ENCODE measurements at regions of chr6 and their contacts with region 1.

Region 1: GRCh38 chr6:53348371-53349208 is at the start of gene ELOVL5:
- DNase-seq: peak; percentile 100
- H3K4me3 ChIP-seq: peak within 1 kb of the TSS; percentile 82 to 98 (median 91)
- H3K27ac ChIP-seq: peak within 1 kb of the TSS; percentile 97 to 100 (median 98)
- H3K4me1 ChIP-seq: peaks cover 7 to 44% (median 31%) of the 10 kb centered on the region in 4 donors
- H3K27me3 ChIP-seq: no peaks in the 10 kb centered on the region
- CTCF ChIP-seq: no peak
- EP300 ChIP-seq: no peak
- POLR2A ChIP-seq: peak; percentile 64
- total RNA-seq, gene ELOVL5: 55.2 to 80.2 (median 64.8) TPM

Region 2: DNA sequence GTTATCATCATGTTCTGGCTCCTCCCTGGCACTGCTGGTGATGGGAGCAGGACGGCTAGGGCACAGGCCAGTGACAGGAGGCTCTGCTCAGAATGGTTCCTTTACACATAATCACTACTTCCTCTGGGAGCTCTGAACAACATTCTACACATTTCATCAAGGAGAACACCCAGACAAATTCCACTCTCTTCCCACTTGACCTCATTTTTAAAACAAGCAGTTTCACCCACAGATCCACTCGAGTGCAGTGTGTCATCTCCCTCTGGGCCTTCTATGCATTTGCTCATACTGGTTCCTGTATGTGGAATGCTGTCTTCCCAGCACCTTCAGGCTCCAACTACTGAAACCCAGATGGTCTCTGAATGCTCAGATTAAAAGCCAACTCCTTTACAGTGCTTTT is 84.7 kb before region 1 on chr6:
- intact Hi-C with region 1: no loop called
- DNase-seq: no peak
- H3K4me3 ChIP-seq: no peak overlapping the region
- H3K27ac ChIP-seq: no peak overlapping the region
- H3K4me1 ChIP-seq: peaks cover 0 to 5% (median 0%) of the 10 kb centered on the region in 4 donors
- H3K27me3 ChIP-seq: no peaks in the 10 kb centered on the region
- CTCF ChIP-seq: no peak
- EP300 ChIP-seq: no peak
- POLR2A ChIP-seq: no peak

Region 3: GRCh38 chr6:53300656-53301551 is 47.7 kb before region 1 on chr6:
- intact Hi-C with region 1: loop called (anchors 5 kb)
- DNase-seq: no peak
- H3K4me3 ChIP-seq: no peak overlapping the region
- H3K27ac ChIP-seq: peak overlapping the region; percentile 10 to 58 (median 50)
- H3K4me1 ChIP-seq: peaks cover 44 to 62% (median 59%) of the 10 kb centered on the region in 4 donors
- H3K27me3 ChIP-seq: no peaks in the 10 kb centered on the region
- CTCF ChIP-seq: no peak
- EP300 ChIP-seq: no peak
- POLR2A ChIP-seq: no peak

Region 4: GRCh38 chr6:54958446-54958845 is 1609.9 kb after region 1 on chr6:
- intact Hi-C with region 1: no loop called
- DNase-seq: no peak
- H3K4me3 ChIP-seq: no peak overlapping the region
- H3K27ac ChIP-seq: no peak overlapping the region
- H3K4me1 ChIP-seq: no peaks in the 10 kb centered on the region
- H3K27me3 ChIP-seq: no peaks in the 10 kb centered on the region
- CTCF ChIP-seq: no peak
- EP300 ChIP-seq: no peak
- POLR2A ChIP-seq: no peak